Naive thymus-derived CD4-positive, alpha-beta T cell (primary cell): ENCODE measurements at regions of chr19 and their contacts with region 1.

Region 1: GRCh38 chr19:38658462-38659306 is 11.2 kb downstream of the ACTN4 start:
- DNase-seq: no peak
- ATAC-seq: no peak
- H3K4me3 ChIP-seq: no peak overlapping the region
- H3K4me3 Mint-ChIP-seq: peak overlapping the region in 4 of 10 donors; percentile 9 to 76 (median 20)
- H3K27ac ChIP-seq: no peak overlapping the region
- H3K27ac Mint-ChIP-seq: no peak overlapping the region
- H3K4me1 ChIP-seq: peaks cover 36 to 67% of the 10 kb centered on the region in 2 donors
- H3K4me1 Mint-ChIP-seq: peaks cover 22 to 73% (median 50%) of the 10 kb centered on the region in 7 donors
- H3K27me3 ChIP-seq: peaks cover 0 to 19% of the 10 kb centered on the region in 2 donors
- H3K27me3 Mint-ChIP-seq: peaks cover 0 to 65% (median 34%) of the 10 kb centered on the region in 5 donors

Region 2: GRCh38 chr19:38699027-38699346 is 40.3 kb after region 1 on chr19:
- CTCF ChIA-PET with region 1: interaction called, 4 read pairs
- POLR2A ChIA-PET with region 1: no interaction called
- intact Hi-C with region 1: loop called in 1 of 2 experiments (anchors 5 kb)
- DNase-seq: peak in 1 of 9 donors; percentile 46
- ATAC-seq: peak; percentile 28
- H3K4me3 ChIP-seq: no peak overlapping the region
- H3K4me3 Mint-ChIP-seq: peak overlapping the region in 1 of 10 donors; percentile 25
- H3K27ac ChIP-seq: no peak overlapping the region
- H3K27ac Mint-ChIP-seq: peak overlapping the region in 1 of 9 donors; percentile 19
- H3K4me1 ChIP-seq: peaks cover under 1 to 38% of the 10 kb centered on the region in 2 donors
- H3K4me1 Mint-ChIP-seq: peaks cover 0 to 47% (median 5%) of the 10 kb centered on the region in 7 donors
- H3K27me3 ChIP-seq: no peaks in the 10 kb centered on the region
- H3K27me3 Mint-ChIP-seq: no peaks in the 10 kb centered on the region

Region 3: GRCh38 chr19:38736413-38737280 is 78.0 kb after region 1 on chr19:
- CTCF ChIA-PET with region 1: no interaction called
- POLR2A ChIA-PET with region 1: interaction called, 3 read pairs
- intact Hi-C with region 1: loop called in 1 of 2 experiments (anchors 2 kb)
- DNase-seq: peak in 6 of 9 donors; percentile 31 to 69 (median 41)
- ATAC-seq: peak; percentile 63
- H3K4me3 ChIP-seq: peak overlapping the region; percentile 24
- H3K4me3 Mint-ChIP-seq: peak overlapping the region; percentile 35 to 83 (median 62)
- H3K27ac ChIP-seq: no peak overlapping the region
- H3K27ac Mint-ChIP-seq: peak overlapping the region in 5 of 9 donors; percentile 13 to 76 (median 36)
- H3K4me1 ChIP-seq: peaks cover 15 to 27% of the 10 kb centered on the region in 2 donors
- H3K4me1 Mint-ChIP-seq: peaks cover 7 to 47% (median 29%) of the 10 kb centered on the region in 7 donors
- H3K27me3 ChIP-seq: no peaks in the 10 kb centered on the region
- H3K27me3 Mint-ChIP-seq: peaks cover 0 to 10% (median 0%) of the 10 kb centered on the region in 5 donors